ENCODE measurements at regions of chr2 and their contacts with region 1.

Region 1: GRCh38 chr2:239814116-239814860 is 210.9 kb downstream of the NDUFA10 start:
- DNase-seq: peak; percentile 80
- H3K4me3 ChIP-seq: peak overlapping the region in 1 of 4 donors; percentile 3
- H3K27ac ChIP-seq: peak overlapping the region; percentile 89 to 97 (median 92)
- H3K4me1 ChIP-seq: peaks cover 0 to 48% (median 40%) of the 10 kb centered on the region in 4 donors
- H3K27me3 ChIP-seq: no peaks in the 10 kb centered on the region
- CTCF ChIP-seq: no peak
- EP300 ChIP-seq: peak; percentile 11 to 83 (median 46)
- POLR2A ChIP-seq: no peak

Region 2: GRCh38 chr2:239075918-239076758 is 738.1 kb before region 1 on chr2:
- intact Hi-C with region 1: loop called (anchors 10 kb)
- DNase-seq: no peak
- H3K4me3 ChIP-seq: no peak overlapping the region
- H3K27ac ChIP-seq: no peak overlapping the region
- H3K4me1 ChIP-seq: no peaks in the 10 kb centered on the region
- H3K27me3 ChIP-seq: no peaks in the 10 kb centered on the region
- CTCF ChIP-seq: no peak
- EP300 ChIP-seq: no peak
- POLR2A ChIP-seq: no peak

Region 3: DNA sequence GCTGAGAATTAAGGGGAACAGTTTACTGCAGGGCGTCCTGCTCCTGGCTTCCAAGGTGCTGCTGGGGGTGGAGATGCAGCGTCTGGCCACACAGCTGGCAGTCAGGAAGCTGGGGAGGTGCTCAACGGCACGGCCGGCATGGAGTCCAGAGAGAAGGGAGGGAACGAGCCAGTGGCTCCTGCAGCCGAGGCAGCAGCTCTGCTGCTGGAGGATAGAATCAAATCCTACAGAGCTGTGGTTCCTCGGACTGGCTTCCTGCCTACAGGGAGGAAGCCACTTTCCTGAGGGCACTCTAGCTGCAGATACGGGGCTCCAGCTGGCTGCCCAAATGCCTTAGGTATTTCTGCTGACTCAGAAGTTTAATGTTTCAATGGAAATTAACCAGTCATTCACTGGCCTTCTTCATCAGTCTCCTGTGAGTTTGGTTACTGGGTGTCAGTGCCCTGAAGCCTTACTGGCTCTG is 700.1 kb before region 1 on chr2:
- intact Hi-C with region 1: loop called (anchors 10 kb)
- DNase-seq: no peak
- H3K4me3 ChIP-seq: no peak overlapping the region
- H3K27ac ChIP-seq: peak overlapping the region; percentile 80 to 96 (median 88)
- H3K4me1 ChIP-seq: peaks cover 0 to 82% (median 55%) of the 10 kb centered on the region in 4 donors
- H3K27me3 ChIP-seq: no peaks in the 10 kb centered on the region
- CTCF ChIP-seq: no peak
- EP300 ChIP-seq: no peak
- POLR2A ChIP-seq: no peak

Region 4: DNA sequence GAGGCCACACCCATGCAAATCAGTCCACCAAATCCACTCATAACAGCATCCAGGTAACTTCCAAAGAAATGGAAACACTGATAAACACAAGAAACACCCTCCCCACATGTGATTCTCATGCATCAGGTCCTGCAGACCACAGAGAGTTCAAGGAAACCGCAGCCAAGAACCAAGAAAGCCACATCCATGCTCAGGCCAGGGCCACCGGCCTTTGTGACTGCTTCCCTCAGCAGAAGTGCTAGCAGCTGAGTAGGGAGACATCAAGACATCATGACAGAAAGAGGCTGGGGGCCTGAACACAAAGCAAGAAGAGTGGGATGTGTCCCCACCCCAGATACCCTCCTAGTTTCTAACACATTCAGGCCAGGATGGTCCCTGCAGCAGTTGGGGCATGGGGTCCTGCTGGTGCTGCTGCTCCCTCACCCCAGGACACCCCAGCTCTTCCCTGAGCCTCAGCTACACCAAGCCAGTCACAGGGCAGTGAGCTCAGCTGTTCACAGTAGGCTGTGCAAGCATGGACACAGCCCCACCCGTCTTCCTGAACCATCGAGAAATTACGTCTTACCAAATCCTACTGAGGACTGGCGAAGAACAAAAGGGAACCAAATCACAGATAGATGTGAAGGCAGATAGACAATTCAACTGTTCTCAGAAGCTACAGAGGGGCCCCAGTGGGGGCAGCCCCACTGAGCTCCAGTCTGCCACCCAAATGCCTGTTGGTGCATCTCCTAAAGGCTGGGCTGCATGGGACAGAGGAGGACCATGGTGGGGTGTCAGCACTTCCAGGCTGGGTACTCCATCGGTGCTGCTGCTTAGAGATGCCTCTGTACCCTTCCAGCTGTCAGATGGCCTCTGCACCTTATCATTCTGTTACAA is 474.3 kb before region 1 on chr2:
- intact Hi-C with region 1: loop called (anchors 10 kb)
- DNase-seq: peak; percentile 64
- H3K4me3 ChIP-seq: no peak overlapping the region
- H3K27ac ChIP-seq: peak overlapping the region; percentile 56 to 97 (median 96)
- H3K4me1 ChIP-seq: peaks cover 0 to 70% (median 60%) of the 10 kb centered on the region in 4 donors
- H3K27me3 ChIP-seq: no peaks in the 10 kb centered on the region
- CTCF ChIP-seq: no peak
- EP300 ChIP-seq: no peak
- POLR2A ChIP-seq: no peak

Region 5: GRCh38 chr2:239979243-239980023 is 165.1 kb after region 1 on chr2:
- intact Hi-C with region 1: loop called (anchors 10 kb)
- DNase-seq: no peak
- H3K4me3 ChIP-seq: no peak overlapping the region
- H3K27ac ChIP-seq: no peak overlapping the region
- H3K4me1 ChIP-seq: no peaks in the 10 kb centered on the region
- H3K27me3 ChIP-seq: no peaks in the 10 kb centered on the region
- CTCF ChIP-seq: no peak
- EP300 ChIP-seq: no peak
- POLR2A ChIP-seq: no peak

Measured in sigmoid colon (tissue), 7 donors.